Activated CD8-positive, alpha-beta T cell treated with anti-CD3 and anti-CD28 coated beads for 36 hours (primary cell): ENCODE measurements at regions of chr5 and their contacts with region 1.

Region 1: GRCh38 chr5:40486437-40487275 is 193.1 kb upstream of the PTGER4 start:
- DNase-seq: peak; percentile 86
- ATAC-seq: peak; percentile 77
- H3K4me3 Mint-ChIP-seq: peak overlapping the region; percentile 41
- H3K27ac Mint-ChIP-seq: peak overlapping the region; percentile 98
- H3K4me1 Mint-ChIP-seq: peaks cover 81% of the 10 kb centered on the region
- H3K27me3 Mint-ChIP-seq: no peaks in the 10 kb centered on the region
- CTCF ChIP-seq: no peak

Region 2: GRCh38 chr5:40223884-40224402 is 262.7 kb before region 1 on chr5:
- CTCF ChIA-PET with region 1: no interaction called
- POLR2A ChIA-PET with region 1: no interaction called
- intact Hi-C with region 1: loop called (anchors 2 kb)
- DNase-seq: peak; percentile 65
- ATAC-seq: peak; percentile 90
- H3K4me3 Mint-ChIP-seq: peak overlapping the region; percentile 14
- H3K27ac Mint-ChIP-seq: peak overlapping the region; percentile 82
- H3K4me1 Mint-ChIP-seq: peaks cover 51% of the 10 kb centered on the region
- H3K27me3 Mint-ChIP-seq: peaks cover 1% of the 10 kb centered on the region
- CTCF ChIP-seq: no peak

Region 3: GRCh38 chr5:40347981-40348725 is 138.5 kb before region 1 on chr5:
- CTCF ChIA-PET with region 1: no interaction called
- POLR2A ChIA-PET with region 1: no interaction called
- intact Hi-C with region 1: no loop called
- DNase-seq: no peak
- ATAC-seq: no peak
- H3K4me3 Mint-ChIP-seq: no peak overlapping the region
- H3K27ac Mint-ChIP-seq: no peak overlapping the region
- H3K4me1 Mint-ChIP-seq: peaks cover 4% of the 10 kb centered on the region
- H3K27me3 Mint-ChIP-seq: no peaks in the 10 kb centered on the region
- CTCF ChIP-seq: no peak

Region 4: DNA sequence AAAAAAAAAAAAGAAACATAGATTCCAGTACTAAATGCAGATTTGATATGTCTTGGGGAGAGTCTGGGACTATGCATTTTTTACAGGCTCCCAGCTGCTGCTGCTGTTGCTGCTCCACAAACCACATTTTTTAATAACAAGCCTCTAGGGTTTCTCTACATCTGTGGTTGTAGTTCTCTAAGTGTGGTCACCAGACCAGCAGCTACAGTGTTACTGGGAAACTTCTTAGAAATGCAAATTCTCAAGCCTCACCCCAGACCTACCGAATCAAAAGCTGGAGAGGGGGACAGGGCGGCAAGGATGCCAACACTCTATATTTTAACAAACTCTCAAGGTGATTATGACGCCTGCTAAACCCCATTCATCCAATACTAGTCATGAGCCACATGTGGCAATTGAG is 100.4 kb before region 1 on chr5:
- CTCF ChIA-PET with region 1: interaction called, 3 read pairs
- POLR2A ChIA-PET with region 1: no interaction called
- intact Hi-C with region 1: loop called (anchors 2 kb)
- DNase-seq: peak; percentile 60
- ATAC-seq: peak; percentile 31
- H3K4me3 Mint-ChIP-seq: no peak overlapping the region
- H3K27ac Mint-ChIP-seq: no peak overlapping the region
- H3K4me1 Mint-ChIP-seq: peaks cover 81% of the 10 kb centered on the region
- H3K27me3 Mint-ChIP-seq: no peaks in the 10 kb centered on the region
- CTCF ChIP-seq: no peak

Region 5: GRCh38 chr5:40437452-40437861 is 49.2 kb before region 1 on chr5:
- CTCF ChIA-PET with region 1: interaction called, 6 read pairs
- POLR2A ChIA-PET with region 1: interaction called, 3 read pairs
- intact Hi-C with region 1: loop called (anchors 2 kb)
- DNase-seq: peak; percentile 63
- ATAC-seq: peak; percentile 72
- H3K4me3 Mint-ChIP-seq: peak overlapping the region; percentile 19
- H3K27ac Mint-ChIP-seq: peak overlapping the region; percentile 86
- H3K4me1 Mint-ChIP-seq: peaks cover 81% of the 10 kb centered on the region
- H3K27me3 Mint-ChIP-seq: no peaks in the 10 kb centered on the region
- CTCF ChIP-seq: no peak

Region 6: GRCh38 chr5:40679155-40679913 is 192.7 kb after region 1 on chr5:
- CTCF ChIA-PET with region 1: interaction called, 6 read pairs
- POLR2A ChIA-PET with region 1: interaction called, 15 read pairs
- intact Hi-C with region 1: loop called (anchors 2 kb)
- DNase-seq: peak; percentile 96
- ATAC-seq: peak; percentile 64
- H3K4me3 Mint-ChIP-seq: peak overlapping the region; percentile 99
- H3K27ac Mint-ChIP-seq: peak overlapping the region; percentile 98
- H3K4me1 Mint-ChIP-seq: peaks cover 33% of the 10 kb centered on the region
- H3K27me3 Mint-ChIP-seq: no peaks in the 10 kb centered on the region
- CTCF ChIP-seq: no peak

Region 7: DNA sequence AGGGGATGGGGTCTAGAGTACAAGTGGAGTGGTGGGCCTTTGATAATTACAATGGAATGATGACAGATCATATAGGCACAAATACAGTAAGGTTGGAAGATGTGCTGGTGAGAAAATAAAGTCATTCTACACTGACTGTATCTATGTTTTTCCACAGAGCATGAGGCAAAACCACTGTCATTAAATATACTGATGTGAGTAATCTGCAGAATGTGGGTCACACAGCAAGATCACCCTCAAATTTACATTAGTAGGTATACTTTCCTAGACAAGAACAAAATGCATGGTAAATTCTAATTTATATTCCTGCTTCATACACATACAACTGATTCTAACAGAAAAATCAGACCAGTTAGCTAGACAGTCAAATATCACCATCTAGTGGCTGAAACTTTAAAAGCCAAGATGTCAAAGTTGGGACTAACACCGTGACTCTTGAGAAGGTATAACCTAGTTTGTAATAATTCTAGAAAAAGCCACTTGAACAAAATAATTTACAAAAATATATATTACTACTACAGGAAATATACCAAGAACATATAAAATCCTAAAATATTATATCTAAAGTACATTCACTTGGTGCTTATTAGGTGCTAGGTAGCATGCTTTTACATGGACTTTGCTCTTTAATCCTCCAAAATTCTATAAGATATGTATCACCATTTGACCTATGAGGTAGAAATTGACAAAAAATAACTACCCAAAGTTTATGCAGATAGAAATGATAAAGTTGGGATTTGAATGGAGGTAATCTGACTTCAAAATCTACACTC is 249.6 kb after region 1 on chr5:
- CTCF ChIA-PET with region 1: no interaction called
- POLR2A ChIA-PET with region 1: no interaction called
- intact Hi-C with region 1: loop called (anchors 5 kb)
- DNase-seq: no peak
- ATAC-seq: peak; percentile 77
- H3K4me3 Mint-ChIP-seq: no peak overlapping the region
- H3K27ac Mint-ChIP-seq: no peak overlapping the region
- H3K4me1 Mint-ChIP-seq: peaks cover 27% of the 10 kb centered on the region
- H3K27me3 Mint-ChIP-seq: no peaks in the 10 kb centered on the region
- CTCF ChIP-seq: peak; percentile 80